ENCODE measurements at regions of chr5 and their contacts with region 1.

Region 1: DNA sequence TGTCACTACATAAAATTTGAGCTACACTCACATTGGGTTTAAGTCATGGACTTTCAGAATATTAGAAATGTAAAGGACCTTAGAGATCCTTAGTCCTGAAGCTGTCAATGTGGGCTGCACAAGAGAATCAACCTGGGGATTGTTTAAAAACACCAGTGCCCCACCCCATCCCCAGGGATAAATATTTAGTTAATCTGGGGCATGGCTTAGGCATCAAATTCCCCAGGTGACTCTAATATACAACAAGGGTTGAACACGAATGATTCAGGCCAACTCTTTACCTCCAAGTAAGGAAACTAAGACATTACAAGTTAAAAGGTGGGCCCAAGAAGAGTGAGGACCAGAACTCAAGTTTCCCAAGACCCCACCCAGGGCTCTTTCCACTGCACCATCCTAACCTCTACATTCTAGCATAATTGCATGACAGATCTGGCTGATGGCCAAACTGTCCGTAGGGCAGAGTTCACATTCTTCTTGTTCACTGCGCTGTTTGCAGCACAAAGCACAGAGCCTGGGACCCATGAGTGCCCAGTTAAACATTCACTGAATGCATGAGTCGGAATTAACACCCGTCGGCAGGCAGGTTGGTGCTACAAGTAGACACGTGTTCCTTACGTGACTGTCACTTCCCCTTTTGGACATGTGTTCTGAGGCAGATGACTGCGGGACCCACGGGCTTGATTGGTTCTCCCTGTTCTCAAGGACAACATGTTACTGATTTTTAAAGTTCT is 25.2 kb downstream of the CYFIP2 start:
- DNase-seq: peak; percentile 51
- CTCF ChIP-seq: no peak

Region 2: GRCh38 chr5:157172403-157172802 is 118.7 kb before region 1 on chr5:
- CTCF ChIA-PET with region 1: no interaction called
- POLR2A ChIA-PET with region 1: no interaction called
- DNase-seq: peak; percentile 82
- CTCF ChIP-seq: no peak

Region 3: DNA sequence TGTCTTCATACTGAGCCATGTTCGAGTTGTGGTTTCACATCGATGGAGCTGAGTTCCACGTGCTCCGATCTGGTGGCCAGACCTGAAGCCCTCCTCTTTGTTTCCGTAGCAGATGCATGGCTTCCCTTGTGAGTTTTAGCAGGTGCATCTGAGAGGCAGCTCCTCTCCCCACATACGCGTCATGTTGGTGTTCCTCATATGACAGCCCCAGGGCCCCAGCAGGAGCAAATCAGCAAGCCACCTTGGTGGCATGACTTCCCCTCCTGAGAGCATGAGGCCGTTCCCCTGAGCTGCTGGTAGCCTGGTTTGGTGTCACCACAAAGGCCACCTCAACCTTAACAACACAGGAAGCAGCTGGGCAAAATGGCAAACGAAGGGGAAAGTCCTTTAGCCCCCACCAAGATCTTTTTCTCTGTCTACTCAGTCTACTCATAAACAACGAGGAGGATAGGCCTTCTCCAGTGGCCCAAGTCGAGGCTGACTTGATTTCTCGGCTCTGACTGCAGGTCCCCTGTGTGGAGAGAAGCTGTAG is 19.3 kb before region 1 on chr5:
- CTCF ChIA-PET with region 1: interaction called, 14 read pairs
- POLR2A ChIA-PET with region 1: no interaction called
- DNase-seq: peak; percentile 74
- CTCF ChIP-seq: no peak

Region 4: GRCh38 chr5:157278319-157279037 is 12.7 kb before region 1 on chr5:
- CTCF ChIA-PET with region 1: interaction called, 14 read pairs
- POLR2A ChIA-PET with region 1: no interaction called
- DNase-seq: no peak
- CTCF ChIP-seq: no peak